ENCODE measurements at regions of chr12 and their contacts with region 1.

Region 1: GRCh38 chr12:50637870-50638481 is 125.9 kb upstream of the ATF1 start:
- DNase-seq: peak; percentile 49
- CTCF ChIP-seq: peak; percentile 36

Region 2: DNA sequence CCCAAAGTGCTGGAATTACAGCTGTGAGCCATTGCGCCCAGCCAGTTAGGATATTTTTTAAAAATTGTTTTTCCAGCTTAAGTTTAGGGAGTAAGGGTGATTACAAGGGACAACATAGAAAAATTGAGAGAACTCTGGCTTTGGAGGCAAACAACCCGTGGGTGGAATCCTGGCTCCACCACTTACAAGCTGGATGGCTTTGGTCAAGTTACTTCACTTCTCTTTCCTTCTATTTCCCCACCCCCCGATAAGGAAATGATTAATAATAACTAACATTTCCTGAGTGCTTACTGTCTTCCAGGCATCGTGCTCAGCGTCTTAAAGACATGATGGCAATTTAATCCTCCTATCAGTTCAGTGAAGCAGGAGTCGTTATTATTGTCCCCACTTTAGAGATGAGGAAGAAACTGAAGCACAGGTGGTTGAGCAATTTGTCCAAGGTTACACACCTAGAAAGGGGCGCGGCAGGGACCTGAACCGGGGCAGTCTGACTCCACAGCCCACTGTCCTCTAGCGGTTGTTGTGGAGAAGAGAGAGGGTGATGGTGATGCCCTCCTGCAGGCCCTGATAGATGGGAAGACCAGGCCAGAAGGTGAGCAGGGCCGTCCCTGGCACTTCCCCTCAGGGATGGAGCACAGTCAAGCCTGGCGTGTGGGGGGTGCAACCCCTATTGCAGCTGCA is 717.6 kb before region 1 on chr12:
- in situ Hi-C with region 1: no loop called
- DNase-seq: no peak
- CTCF ChIP-seq: no peak

Region 3: GRCh38 chr12:50504798-50505385 is 133.1 kb before region 1 on chr12 and contains the start of gene DIP2B:
- in situ Hi-C with region 1: loop called (anchors 5 kb)
- DNase-seq: peak; percentile 92
- CTCF ChIP-seq: peak; percentile 90

Region 4: GRCh38 chr12:50751948-50752721 is 114.2 kb after region 1 on chr12:
- in situ Hi-C with region 1: no loop called
- DNase-seq: peak; percentile 72
- CTCF ChIP-seq: no peak

Region 5: DNA sequence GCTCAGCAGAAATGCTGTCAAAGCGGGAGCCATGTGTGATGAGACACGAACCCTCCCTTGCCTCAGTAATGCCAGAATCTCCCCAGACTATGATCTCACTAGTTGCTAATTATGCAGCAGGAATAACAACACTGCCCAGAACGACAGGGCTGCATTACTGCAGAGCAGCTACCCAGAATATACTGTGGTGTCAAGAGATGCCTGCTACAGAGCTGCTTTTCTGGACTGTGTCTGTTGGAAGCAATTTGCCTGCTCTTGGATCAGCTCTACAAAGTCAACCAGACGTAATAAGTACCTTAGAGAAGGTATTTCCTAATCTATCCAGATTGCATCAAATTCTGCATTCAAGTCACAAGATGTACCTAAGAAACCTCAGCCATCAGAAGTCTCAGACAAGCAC is 440.0 kb after region 1 on chr12:
- in situ Hi-C with region 1: no loop called
- DNase-seq: no peak
- CTCF ChIP-seq: no peak

Measured in GM13976 (cell line).